ENCODE measurements at regions of chr12 and their contacts with region 1.

Region 1: DNA sequence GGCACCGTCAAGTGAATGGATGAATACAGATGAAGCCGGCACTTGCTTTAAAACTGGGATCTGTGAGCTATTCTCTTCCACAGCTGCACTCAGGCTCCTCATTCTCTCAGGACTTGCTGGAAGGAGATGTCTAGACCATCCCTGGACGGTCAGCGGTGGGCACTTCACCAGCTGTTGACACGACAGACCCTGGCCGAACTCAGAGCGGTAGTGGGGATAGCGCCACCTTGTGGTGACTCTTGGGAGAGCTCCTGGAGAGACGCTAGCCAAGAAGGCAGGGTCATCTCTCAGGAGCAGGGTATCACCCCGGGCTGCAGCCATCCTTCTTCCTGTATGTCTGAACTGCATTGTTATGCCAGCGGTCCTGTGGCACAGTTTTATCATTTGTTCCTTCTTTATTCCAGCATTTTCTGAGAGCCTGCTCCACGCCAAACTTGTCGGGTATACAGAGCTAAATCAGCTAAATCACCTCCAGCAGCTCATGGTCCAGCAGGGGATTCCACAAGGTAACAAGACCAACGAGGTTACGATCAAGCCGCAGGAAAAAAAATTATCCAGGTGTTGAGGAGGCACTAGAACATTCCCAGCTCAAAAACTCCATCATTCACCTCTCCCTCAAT is 10.0 kb downstream of the WNT1 start:
- DNase-seq: peak; percentile 61 to 82 (median 68)
- H3K4me3 ChIP-seq: no peak overlapping the region
- H3K4me3 Mint-ChIP-seq: peak overlapping the region in 1 of 7 donors; percentile 3
- H3K27ac ChIP-seq: no peak overlapping the region
- H3K27ac Mint-ChIP-seq: peak overlapping the region in 5 of 8 donors; percentile 32 to 90 (median 66)
- H3K4me1 ChIP-seq: no peaks in the 10 kb centered on the region
- H3K4me1 Mint-ChIP-seq: peaks cover 6 to 11% (median 9%) of the 10 kb centered on the region in 3 donors
- H3K27me3 ChIP-seq: no peaks in the 10 kb centered on the region
- H3K27me3 Mint-ChIP-seq: peaks cover 25 to 31% of the 10 kb centered on the region in 2 donors

Region 2: DNA sequence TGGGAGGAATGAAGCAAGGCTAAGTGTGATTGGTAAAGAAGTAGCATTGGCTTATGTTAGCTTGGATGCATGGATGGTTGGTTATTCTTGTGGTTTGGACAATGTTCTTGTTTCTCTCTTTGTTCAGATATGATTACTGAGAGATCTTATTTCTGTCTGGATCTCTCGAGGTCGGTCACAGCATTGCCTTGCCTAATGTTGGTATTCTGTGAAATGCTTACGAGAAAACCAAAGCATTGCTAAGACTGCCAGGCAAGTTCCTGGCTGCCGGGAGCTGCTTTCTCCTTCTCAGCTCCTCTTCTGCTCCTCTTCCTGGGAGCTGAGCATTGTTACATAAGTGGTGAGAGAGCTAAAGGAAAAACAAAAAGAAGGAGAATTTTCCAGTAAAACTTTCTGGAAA is 115.0 kb before region 1 on chr12:
- CTCF ChIA-PET with region 1: no interaction called
- POLR2A ChIA-PET with region 1: no interaction called
- DNase-seq: no peak
- H3K4me3 ChIP-seq: no peak overlapping the region
- H3K4me3 Mint-ChIP-seq: no peak overlapping the region
- H3K27ac ChIP-seq: no peak overlapping the region
- H3K27ac Mint-ChIP-seq: peak overlapping the region in 1 of 8 donors; percentile 42
- H3K4me1 ChIP-seq: no peaks in the 10 kb centered on the region
- H3K4me1 Mint-ChIP-seq: no peaks in the 10 kb centered on the region
- H3K27me3 ChIP-seq: no peaks in the 10 kb centered on the region
- H3K27me3 Mint-ChIP-seq: no peaks in the 10 kb centered on the region

Region 3: DNA sequence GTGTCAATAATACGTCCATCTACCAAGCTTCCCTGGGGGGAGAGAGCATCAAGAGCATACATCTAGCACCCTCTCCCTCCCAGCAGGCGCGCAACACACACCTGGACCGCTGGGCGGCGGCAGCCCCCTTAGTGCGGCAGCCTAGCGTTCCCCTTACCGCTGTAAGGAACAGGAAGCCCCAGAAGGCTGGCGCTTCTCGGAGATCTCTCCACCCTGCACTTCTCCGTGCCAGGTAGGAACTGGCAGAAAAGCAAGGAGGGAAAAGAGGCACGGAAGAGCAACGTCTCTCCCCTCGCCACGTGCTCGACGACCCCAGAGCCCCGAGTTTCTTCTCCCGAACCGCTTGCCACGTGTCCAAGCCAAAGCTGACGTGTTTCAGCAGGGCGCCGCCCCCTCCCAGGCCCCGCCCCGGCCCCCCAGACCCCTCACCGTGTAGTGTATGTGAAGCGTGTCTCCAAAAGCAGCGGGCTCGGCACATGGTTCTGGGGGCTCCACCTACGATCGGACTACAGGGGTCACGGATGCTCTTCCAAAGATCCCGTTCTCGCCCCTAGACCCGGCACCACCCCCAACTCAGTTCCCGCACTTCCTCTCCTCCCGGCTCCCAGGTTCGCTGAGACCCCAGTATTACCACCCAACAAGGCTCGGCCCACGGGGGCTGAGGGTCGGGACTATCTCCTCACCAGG is 63.4 kb before region 1 on chr12:
- CTCF ChIA-PET with region 1: interaction called, 13 read pairs
- POLR2A ChIA-PET with region 1: no interaction called
- DNase-seq: peak; percentile 63 to 86 (median 81)
- H3K4me3 ChIP-seq: peak overlapping the region; percentile 96
- H3K4me3 Mint-ChIP-seq: peak overlapping the region; percentile 88 to 98 (median 96)
- H3K27ac ChIP-seq: peak overlapping the region; percentile 90
- H3K27ac Mint-ChIP-seq: peak overlapping the region; percentile 91 to 100 (median 98)
- H3K4me1 ChIP-seq: peaks cover 12% of the 10 kb centered on the region
- H3K4me1 Mint-ChIP-seq: peaks cover 53 to 64% (median 62%) of the 10 kb centered on the region in 3 donors
- H3K27me3 ChIP-seq: no peaks in the 10 kb centered on the region
- H3K27me3 Mint-ChIP-seq: no peaks in the 10 kb centered on the region

Region 4: GRCh38 chr12:48957141-48958048 is 30.7 kb before region 1 on chr12 and contains the start of gene ARF3:
- CTCF ChIA-PET with region 1: interaction called, 18 read pairs
- POLR2A ChIA-PET with region 1: interaction called, 3 read pairs
- DNase-seq: peak; percentile 90 to 96 (median 92)
- H3K4me3 ChIP-seq: peak within 1 kb of the TSS; percentile 83
- H3K4me3 Mint-ChIP-seq: peak within 1 kb of the TSS; percentile 93 to 99 (median 96)
- H3K27ac ChIP-seq: peak within 1 kb of the TSS; percentile 84
- H3K27ac Mint-ChIP-seq: peak within 1 kb of the TSS; percentile 68 to 97 (median 93)
- H3K4me1 ChIP-seq: peaks cover 33% of the 10 kb centered on the region
- H3K4me1 Mint-ChIP-seq: peaks cover 35 to 54% (median 44%) of the 10 kb centered on the region in 3 donors
- H3K27me3 ChIP-seq: no peaks in the 10 kb centered on the region
- H3K27me3 Mint-ChIP-seq: peaks cover 0 to 6% of the 10 kb centered on the region in 2 donors
- total RNA-seq, gene ARF3: 91.5 to 91.8 TPM

Region 5: GRCh38 chr12:48977315-48978281 is 10.5 kb before region 1 on chr12:
- CTCF ChIA-PET with region 1: interaction called, 237 read pairs
- POLR2A ChIA-PET with region 1: interaction called, 5 read pairs
- DNase-seq: peak; percentile 77 to 87 (median 80)
- H3K4me3 ChIP-seq: peak overlapping the region; percentile 89
- H3K4me3 Mint-ChIP-seq: peak overlapping the region; percentile 63 to 73 (median 71)
- H3K27ac ChIP-seq: no peak overlapping the region
- H3K27ac Mint-ChIP-seq: peak overlapping the region in 7 of 8 donors; percentile 36 to 93 (median 87)
- H3K4me1 ChIP-seq: peaks cover 49% of the 10 kb centered on the region
- H3K4me1 Mint-ChIP-seq: peaks cover 43 to 58% (median 51%) of the 10 kb centered on the region in 3 donors
- H3K27me3 ChIP-seq: peaks cover 25% of the 10 kb centered on the region
- H3K27me3 Mint-ChIP-seq: peaks cover 12 to 22% of the 10 kb centered on the region in 2 donors

Region 6: DNA sequence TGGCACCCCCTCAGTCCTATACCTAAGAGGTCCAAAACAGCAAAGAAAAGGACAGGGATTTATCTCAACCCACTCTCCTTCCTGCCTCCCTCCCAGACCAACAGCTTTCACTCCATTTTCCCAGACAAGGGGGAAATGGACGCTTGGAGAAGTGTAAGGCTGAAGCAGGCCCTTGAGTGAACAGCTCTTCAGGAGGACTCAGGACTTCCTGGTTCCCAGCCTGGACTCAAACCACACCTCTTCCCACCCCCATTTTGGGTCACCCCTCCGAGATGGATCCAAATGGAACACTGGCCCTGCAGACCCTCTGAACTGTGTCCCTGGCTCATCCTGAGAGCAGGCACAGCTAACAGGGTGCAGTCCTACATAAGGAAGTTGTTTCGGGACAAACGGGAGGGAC is 69.7 kb after region 1 on chr12:
- CTCF ChIA-PET with region 1: no interaction called
- POLR2A ChIA-PET with region 1: no interaction called
- DNase-seq: no peak
- H3K4me3 ChIP-seq: peak overlapping the region; percentile 83
- H3K4me3 Mint-ChIP-seq: peak overlapping the region; percentile 76 to 96 (median 92)
- H3K27ac ChIP-seq: peak overlapping the region; percentile 90
- H3K27ac Mint-ChIP-seq: peak overlapping the region; percentile 33 to 96 (median 85)
- H3K4me1 ChIP-seq: peaks cover 58% of the 10 kb centered on the region
- H3K4me1 Mint-ChIP-seq: peaks cover 52 to 79% (median 64%) of the 10 kb centered on the region in 3 donors
- H3K27me3 ChIP-seq: no peaks in the 10 kb centered on the region
- H3K27me3 Mint-ChIP-seq: peaks cover 0 to 5% of the 10 kb centered on the region in 2 donors